Right lobe of liver (tissue), 6 donors: ENCODE measurements at regions of chr17 and their contacts with region 1.

Region 1: DNA sequence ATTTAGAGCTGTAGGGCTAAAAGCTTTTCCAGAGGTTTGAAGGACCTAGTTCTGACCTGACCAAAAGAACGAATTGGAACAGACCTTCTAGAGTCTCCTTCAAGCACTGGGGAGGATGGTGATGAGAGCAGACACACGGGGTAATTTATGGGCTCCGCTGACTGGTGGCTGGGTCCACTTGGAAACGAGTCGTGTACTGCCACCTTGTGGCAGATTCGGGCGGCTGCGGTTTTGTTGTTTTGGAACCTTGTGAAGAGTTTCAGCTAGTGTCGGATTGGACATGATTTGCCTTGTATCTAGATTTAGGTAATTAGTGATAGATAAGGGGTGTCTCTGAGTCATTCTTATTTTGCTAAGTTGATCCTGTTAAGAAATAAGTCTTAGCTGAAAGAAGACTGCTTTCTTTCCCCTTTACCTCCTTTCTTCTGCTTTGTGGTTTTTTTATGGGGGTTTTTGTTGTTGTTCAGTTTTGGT is 98.9 kb downstream of the AATF start:
- DNase-seq: peak; percentile 75 to 81 (median 80)
- ATAC-seq: peak; percentile 80 to 85 (median 83)
- H3K4me3 ChIP-seq: no peak overlapping the region
- H3K27ac ChIP-seq: no peak overlapping the region
- H3K4me1 ChIP-seq: peaks cover 0 to 22% (median 8%) of the 10 kb centered on the region in 4 donors
- H3K27me3 ChIP-seq: no peaks in the 10 kb centered on the region
- CTCF ChIP-seq: peak; percentile 81 to 90 (median 88)
- POLR2A ChIP-seq: no peak

Region 2: GRCh38 chr17:36632916-36633771 is 414.5 kb before region 1 on chr17:
- intact Hi-C with region 1: loop called in 1 of 2 experiments (anchors 10 kb)
- DNase-seq: no peak
- ATAC-seq: no peak
- H3K4me3 ChIP-seq: no peak overlapping the region
- H3K27ac ChIP-seq: no peak overlapping the region
- H3K4me1 ChIP-seq: no peaks in the 10 kb centered on the region
- H3K27me3 ChIP-seq: no peaks in the 10 kb centered on the region
- CTCF ChIP-seq: no peak
- POLR2A ChIP-seq: no peak

Region 3: GRCh38 chr17:36948717-36949460 is 98.8 kb before region 1 on chr17 and contains the start of gene AATF:
- intact Hi-C with region 1: loop called (anchors 10 kb)
- DNase-seq: peak; percentile 97 to 98 (median 98)
- ATAC-seq: peak; percentile 98 to 99 (median 99)
- H3K4me3 ChIP-seq: peak within 1 kb of the TSS; percentile 86 to 93 (median 91)
- H3K27ac ChIP-seq: peak within 1 kb of the TSS; percentile 58 to 84 (median 60)
- H3K4me1 ChIP-seq: peaks cover 0 to 17% (median 7%) of the 10 kb centered on the region in 4 donors
- H3K27me3 ChIP-seq: peaks cover 7 to 30% of the 10 kb centered on the region in 2 donors
- CTCF ChIP-seq: no peak
- POLR2A ChIP-seq: peak; percentile 84
- total RNA-seq, gene AATF: 13.2 to 19.5 (median 16.7) TPM